ENCODE measurements at regions of chr12 and their contacts with region 1.

Region 1: DNA sequence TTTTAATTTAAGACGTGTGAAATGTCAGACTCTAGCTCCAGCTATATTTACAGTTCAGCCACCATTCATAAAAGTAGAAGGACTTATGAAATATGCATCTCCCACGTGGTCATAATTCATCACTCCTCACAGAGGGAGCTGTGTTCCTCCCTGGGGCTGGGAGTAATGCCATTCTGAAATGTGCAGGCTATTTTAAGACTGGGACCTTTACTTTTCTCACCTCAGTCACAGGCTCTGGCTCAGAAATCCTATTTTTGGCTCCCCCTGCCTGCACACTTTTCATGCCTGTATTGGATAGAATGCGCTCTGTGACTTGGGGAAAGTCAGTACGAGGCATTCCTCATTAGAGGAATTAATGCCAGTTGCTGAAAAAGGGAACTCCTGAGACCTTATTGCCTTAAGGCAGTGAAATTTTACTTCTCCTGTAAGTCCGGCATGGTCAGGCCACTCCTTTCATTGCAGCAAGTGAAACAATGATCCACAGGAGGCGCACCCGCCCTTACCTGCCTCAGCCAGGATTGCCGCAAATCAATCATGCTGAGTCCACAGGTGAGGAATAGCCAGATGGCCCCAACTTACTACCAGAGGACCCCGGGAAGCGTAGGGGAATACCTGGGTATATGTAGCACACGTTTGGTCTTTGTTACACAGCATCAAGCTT is 1133.2 kb upstream of the TMEM132C start:
- DNase-seq: no peak
- H3K4me3 ChIP-seq: no peak overlapping the region
- H3K27ac ChIP-seq: no peak overlapping the region
- H3K4me1 ChIP-seq: no peaks in the 10 kb centered on the region
- H3K27me3 ChIP-seq: no peaks in the 10 kb centered on the region
- CTCF ChIP-seq: no peak
- POLR2A ChIP-seq: no peak

Region 2: GRCh38 chr12:125159683-125160082 is 1974.1 kb before region 1 on chr12:
- CTCF ChIA-PET with region 1: no interaction called
- POLR2A ChIA-PET with region 1: no interaction called
- dilution Hi-C with region 1: no loop called
- intact Hi-C with region 1: loop called (anchors 5 kb)
- DNase-seq: no peak
- H3K4me3 ChIP-seq: no peak overlapping the region
- H3K27ac ChIP-seq: no peak overlapping the region
- H3K4me1 ChIP-seq: no peaks in the 10 kb centered on the region
- H3K27me3 ChIP-seq: no peaks in the 10 kb centered on the region
- CTCF ChIP-seq: no peak
- POLR2A ChIP-seq: no peak

Measured in endothelial cell of umbilical vein (primary cell).